CD14-positive monocyte (primary cell): ENCODE measurements at regions of chr13 and their contacts with region 1.

Region 1: GRCh38 chr13:40982772-40983171 is 36.3 kb downstream of the ELF1 start:
- DNase-seq: peak; percentile 77 to 83 (median 83)
- H3K4me3 ChIP-seq: peak overlapping the region; percentile 56 to 99 (median 92)
- H3K4me3 Mint-ChIP-seq: peak overlapping the region; percentile 61 to 92
- H3K27ac ChIP-seq: peak overlapping the region; percentile 35 to 91
- H3K27ac Mint-ChIP-seq: peak overlapping the region; percentile 85 to 99 (median 92)
- H3K4me1 ChIP-seq: peaks cover 64 to 85% of the 10 kb centered on the region in 2 donors
- H3K4me1 Mint-ChIP-seq: peaks cover 55% of the 10 kb centered on the region
- H3K27me3 ChIP-seq: no peaks in the 10 kb centered on the region
- H3K27me3 Mint-ChIP-seq: no peaks in the 10 kb centered on the region
- CTCF ChIP-seq: no peak

Region 2: DNA sequence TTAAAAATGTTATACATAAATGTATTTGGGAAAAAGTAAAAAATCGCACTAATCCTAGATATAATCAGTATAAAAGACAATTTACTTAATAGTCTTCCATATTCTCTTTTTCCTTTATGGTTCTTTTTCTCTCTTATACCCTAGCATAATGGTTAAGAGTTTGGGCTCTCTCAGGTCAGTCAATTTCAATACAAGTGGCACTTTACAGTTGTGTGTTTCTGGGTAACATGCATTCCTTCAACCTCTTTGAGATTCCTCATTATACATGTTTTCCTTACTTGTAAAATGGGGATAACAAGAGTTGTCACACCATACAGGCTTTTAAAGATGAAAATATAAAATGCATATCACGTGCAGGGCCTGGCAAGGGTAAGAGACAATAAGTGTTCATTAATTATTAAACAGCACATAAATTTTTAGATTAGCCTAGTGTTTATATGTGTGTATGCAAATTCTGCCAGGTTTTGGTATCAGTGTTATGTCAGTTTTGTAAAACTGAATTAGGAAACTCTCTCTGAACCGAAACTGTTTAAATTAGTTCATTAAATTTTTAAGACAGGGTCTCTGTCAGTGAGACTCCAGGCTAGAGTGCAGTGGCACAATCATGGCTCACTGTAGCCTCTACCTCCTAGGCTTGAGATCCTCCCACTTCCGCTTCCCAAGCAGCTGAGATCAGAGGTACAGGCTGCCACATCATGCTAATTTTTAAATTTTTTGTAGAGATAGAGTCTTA is 13.4 kb before region 1 on chr13:
- intact Hi-C with region 1: loop called in 1 of 2 experiments (anchors 2 kb)
- DNase-seq: peak; percentile 52 to 80 (median 77)
- H3K4me3 ChIP-seq: peak overlapping the region in 1 of 3 experiments; percentile 69
- H3K4me3 Mint-ChIP-seq: peak overlapping the region; percentile 13 to 31
- H3K27ac ChIP-seq: peak overlapping the region; percentile 44 to 71
- H3K27ac Mint-ChIP-seq: peak overlapping the region; percentile 68 to 91 (median 86)
- H3K4me1 ChIP-seq: peaks cover 75 to 99% of the 10 kb centered on the region in 2 donors
- H3K4me1 Mint-ChIP-seq: peaks cover 93% of the 10 kb centered on the region
- H3K27me3 ChIP-seq: no peaks in the 10 kb centered on the region
- H3K27me3 Mint-ChIP-seq: no peaks in the 10 kb centered on the region
- CTCF ChIP-seq: no peak

Region 3: DNA sequence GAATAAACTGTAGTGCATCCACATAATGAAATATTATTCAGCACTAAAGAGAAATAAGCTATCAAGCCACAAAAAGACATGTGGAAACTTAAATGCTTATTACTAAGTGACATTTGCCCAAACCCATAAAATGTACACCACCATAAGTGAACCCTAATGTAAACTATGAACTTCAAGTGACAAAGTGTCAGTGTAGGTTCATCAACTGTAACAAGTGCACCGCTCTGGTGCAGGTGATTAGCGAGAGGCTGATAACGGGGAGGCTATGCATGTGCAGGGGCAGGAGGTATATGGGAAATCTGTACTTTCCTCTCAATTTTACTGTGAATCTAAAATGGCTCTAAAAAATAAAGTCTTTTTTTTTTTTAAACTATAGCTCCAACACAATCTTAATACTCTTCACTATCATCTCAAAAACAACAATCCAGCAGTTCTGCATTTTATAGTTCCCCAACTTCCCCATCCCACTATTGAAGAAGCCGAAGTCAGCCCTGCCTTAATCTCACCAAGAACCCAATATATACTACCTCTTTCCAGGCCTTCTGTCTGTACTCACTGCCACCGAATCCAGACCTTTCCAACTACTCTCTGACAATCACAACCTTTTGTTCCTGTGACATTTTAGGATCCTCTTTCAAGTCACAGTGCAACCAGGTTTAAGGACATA is 13.8 kb after region 1 on chr13:
- intact Hi-C with region 1: loop called in 1 of 2 experiments (anchors 2 kb)
- DNase-seq: peak; percentile 71 to 78 (median 72)
- H3K4me3 ChIP-seq: peak overlapping the region in 1 of 3 experiments; percentile 52
- H3K4me3 Mint-ChIP-seq: peak overlapping the region in 1 of 2 donors; percentile 78
- H3K27ac ChIP-seq: peak overlapping the region; percentile 26 to 69
- H3K27ac Mint-ChIP-seq: peak overlapping the region; percentile 76 to 92 (median 87)
- H3K4me1 ChIP-seq: peaks cover 50 to 80% of the 10 kb centered on the region in 2 donors
- H3K4me1 Mint-ChIP-seq: peaks cover 74% of the 10 kb centered on the region
- H3K27me3 ChIP-seq: no peaks in the 10 kb centered on the region
- H3K27me3 Mint-ChIP-seq: peaks cover 0 to 4% (median 0%) of the 10 kb centered on the region in 3 donors
- CTCF ChIP-seq: no peak

Region 4: DNA sequence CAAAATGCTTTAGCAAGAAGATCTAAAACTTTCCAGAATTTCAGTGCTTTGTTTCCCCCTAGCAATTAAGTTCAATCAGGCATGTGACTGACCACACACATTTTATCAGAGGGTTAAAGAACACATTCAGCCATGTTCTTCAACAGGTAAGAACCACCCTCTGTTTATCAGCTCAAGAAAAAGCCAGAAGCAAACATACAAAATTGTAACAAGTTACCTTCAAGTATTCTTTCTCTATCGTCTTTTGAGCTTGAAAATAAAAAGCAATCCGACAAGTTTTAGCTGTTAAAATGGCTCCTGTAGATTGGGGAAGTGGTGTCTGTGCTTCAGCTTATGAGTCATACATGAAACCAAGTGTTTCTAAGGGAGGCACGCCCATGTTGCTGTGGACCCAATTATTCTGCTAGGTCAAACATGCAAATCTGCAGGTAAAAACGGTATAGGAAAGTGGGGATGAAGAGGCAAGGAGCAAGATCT is 36.3 kb after region 1 on chr13 and contains the start of gene ELF1:
- intact Hi-C with region 1: loop called (anchors 5 kb)
- DNase-seq: peak; percentile 89 to 94 (median 94)
- H3K4me3 ChIP-seq: peak within 1 kb of the TSS; percentile 86 to 100 (median 89)
- H3K4me3 Mint-ChIP-seq: peak within 1 kb of the TSS; percentile 83 to 93
- H3K27ac ChIP-seq: peak within 1 kb of the TSS; percentile 71 to 100
- H3K27ac Mint-ChIP-seq: peak within 1 kb of the TSS; percentile 97 to 100 (median 99)
- H3K4me1 ChIP-seq: peaks cover 32 to 38% of the 10 kb centered on the region in 2 donors
- H3K4me1 Mint-ChIP-seq: peaks cover 38% of the 10 kb centered on the region
- H3K27me3 ChIP-seq: no peaks in the 10 kb centered on the region
- H3K27me3 Mint-ChIP-seq: no peaks in the 10 kb centered on the region
- CTCF ChIP-seq: no peak
- polyA plus RNA-seq, gene ELF1: 63.1 to 83.3 (median 83.3) TPM